ENCODE measurements at regions of chr2 and their contacts with region 1.

Region 1: DNA sequence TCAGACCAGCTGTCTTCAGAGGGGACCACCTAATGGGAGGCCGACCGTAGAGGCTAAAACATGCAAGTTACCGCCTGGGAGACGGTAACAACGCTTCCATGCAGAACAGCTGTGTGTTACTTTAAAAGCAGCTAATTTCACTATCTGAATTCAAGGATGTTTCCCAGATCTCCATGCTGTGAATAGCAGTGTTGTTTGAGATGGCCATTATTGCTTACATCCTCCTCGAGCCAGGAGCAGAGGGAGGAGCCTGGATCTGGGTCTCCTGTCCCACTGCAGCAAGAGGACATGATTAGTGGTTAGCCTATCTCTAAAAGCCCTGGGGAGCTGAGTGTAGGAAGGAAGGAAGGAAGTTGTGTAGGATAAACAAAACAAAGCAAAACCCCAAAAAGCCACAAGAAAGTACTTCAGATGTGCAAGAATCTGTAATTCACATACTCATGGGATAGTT is 50.9 kb downstream of the ACTR2 start:
- DNase-seq: peak in 2 of 4 experiments; percentile 58 to 62
- ATAC-seq: peak; percentile 83
- H3K4me3 ChIP-seq: no peak overlapping the region
- H3K27ac ChIP-seq: no peak overlapping the region
- H3K4me1 ChIP-seq: peaks cover 4 to 17% of the 10 kb centered on the region in 2 experiments; a peak in 4 of 5 replicates
- H3K27me3 ChIP-seq: no peaks in the 10 kb centered on the region
- CTCF ChIP-seq: no peak
- EP300 ChIP-seq: peak; percentile 15; the same call in 1 of the 2 replicates
- POLR2A ChIP-seq: no peak
- RAD21 ChIP-seq: no peak; a peak in 1 of 4 replicates

Region 2: GRCh38 chr2:65107530-65107929 is 171.0 kb before region 1 on chr2:
- CTCF ChIA-PET with region 1: no interaction called
- POLR2A ChIA-PET with region 1: no interaction called
- in situ Hi-C with region 1: no loop called
- intact Hi-C with region 1: no loop called
- DNase-seq: no peak
- ATAC-seq: no peak
- H3K4me3 ChIP-seq: no peak overlapping the region
- H3K27ac ChIP-seq: no peak overlapping the region
- H3K4me1 ChIP-seq: no peaks in the 10 kb centered on the region
- H3K27me3 ChIP-seq: no peaks in the 10 kb centered on the region
- CTCF ChIP-seq: no peak
- EP300 ChIP-seq: no peak
- POLR2A ChIP-seq: no peak
- RAD21 ChIP-seq: no peak

Region 3: DNA sequence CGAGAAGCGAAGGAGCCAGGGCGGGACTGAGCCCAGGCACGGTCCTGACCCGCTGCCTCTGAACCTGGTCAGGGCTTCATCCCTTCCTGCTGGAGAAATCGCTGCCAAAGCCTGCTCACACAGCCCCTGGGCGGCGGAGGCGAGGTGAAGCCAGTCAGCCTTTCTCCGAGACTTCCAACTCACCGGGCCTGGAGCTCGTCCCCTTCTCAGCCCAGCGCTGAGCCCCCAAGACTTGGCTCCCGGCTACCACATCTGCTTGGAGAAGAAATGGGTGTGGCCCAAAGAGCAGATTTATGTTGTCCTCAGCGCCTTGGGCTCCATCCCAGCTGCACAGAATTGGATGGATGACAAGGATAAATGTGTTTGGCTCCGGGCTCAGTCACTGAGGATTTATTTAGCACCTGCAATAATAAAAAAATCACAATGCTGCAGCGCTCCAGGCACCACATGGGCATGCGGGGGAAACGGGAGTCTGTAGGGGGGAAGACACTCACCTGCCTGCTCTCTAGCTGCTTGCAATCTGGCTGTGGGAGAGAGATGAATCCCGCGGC is 14.0 kb after region 1 on chr2:
- CTCF ChIA-PET with region 1: no interaction called
- POLR2A ChIA-PET with region 1: interaction called, 16 read pairs
- in situ Hi-C with region 1: no loop called
- intact Hi-C with region 1: no loop called
- DNase-seq: no peak
- ATAC-seq: no peak
- H3K4me3 ChIP-seq: no peak overlapping the region
- H3K27ac ChIP-seq: no peak overlapping the region
- H3K4me1 ChIP-seq: peaks cover 30 to 34% of the 10 kb centered on the region in 2 experiments
- H3K27me3 ChIP-seq: no peaks in the 10 kb centered on the region
- CTCF ChIP-seq: no peak
- EP300 ChIP-seq: no peak
- POLR2A ChIP-seq: no peak
- RAD21 ChIP-seq: no peak

Region 4: DNA sequence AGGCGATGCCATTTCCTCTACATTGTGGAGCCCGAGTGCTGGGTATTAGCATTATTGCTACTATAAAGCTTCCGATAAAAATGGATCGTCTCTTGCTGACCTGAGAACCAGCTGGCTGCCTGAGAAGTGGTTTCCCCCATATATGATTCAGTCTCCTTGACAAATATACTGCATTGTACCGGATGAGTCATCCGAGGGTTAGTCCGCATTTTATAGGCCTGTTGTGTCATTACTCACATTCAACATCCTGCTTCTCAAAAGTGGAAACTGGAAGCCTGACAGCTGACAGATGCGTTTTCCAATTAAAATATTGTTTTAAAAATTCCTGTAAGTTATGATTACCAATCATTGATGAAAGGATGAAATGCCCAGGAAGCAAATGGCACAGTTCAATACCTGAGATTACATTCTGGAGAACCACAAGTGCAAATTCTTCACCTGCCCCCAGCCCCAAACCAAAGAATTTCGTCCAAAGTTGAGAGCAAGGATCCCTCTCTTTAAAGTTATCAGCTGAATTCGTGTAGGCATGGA is 88.1 kb after region 1 on chr2:
- CTCF ChIA-PET with region 1: no interaction called
- POLR2A ChIA-PET with region 1: no interaction called
- in situ Hi-C with region 1: no loop called
- intact Hi-C with region 1: loop called (anchors 5 kb)
- DNase-seq: peak; percentile 61 to 86 (median 73)
- ATAC-seq: peak; percentile 83
- H3K4me3 ChIP-seq: peak overlapping the region; percentile 2; the same call in 1 of the 2 replicates
- H3K27ac ChIP-seq: peak overlapping the region; percentile 75
- H3K4me1 ChIP-seq: peaks cover 12 to 64% of the 10 kb centered on the region in 2 experiments
- H3K27me3 ChIP-seq: no peaks in the 10 kb centered on the region
- CTCF ChIP-seq: no peak
- EP300 ChIP-seq: peak; percentile 63; the same call in 1 of the 2 replicates
- POLR2A ChIP-seq: no peak
- RAD21 ChIP-seq: no peak

Region 5: GRCh38 chr2:65566620-65567019 is 288.1 kb after region 1 on chr2:
- CTCF ChIA-PET with region 1: no interaction called
- POLR2A ChIA-PET with region 1: no interaction called
- in situ Hi-C with region 1: no loop called
- intact Hi-C with region 1: loop called (anchors 5 kb)
- DNase-seq: no peak
- ATAC-seq: peak; percentile 32; the same call in 2 of the 3 replicates
- H3K4me3 ChIP-seq: no peak overlapping the region
- H3K27ac ChIP-seq: no peak overlapping the region
- H3K4me1 ChIP-seq: peaks cover 6 to 17% of the 10 kb centered on the region in 2 experiments
- H3K27me3 ChIP-seq: no peaks in the 10 kb centered on the region
- CTCF ChIP-seq: no peak
- EP300 ChIP-seq: no peak
- POLR2A ChIP-seq: no peak
- RAD21 ChIP-seq: no peak

Measured in K562 (cell line).